CD4-positive, alpha-beta T cell (primary cell): ENCODE measurements at regions of chr16 and their contacts with region 1.

Region 1: DNA sequence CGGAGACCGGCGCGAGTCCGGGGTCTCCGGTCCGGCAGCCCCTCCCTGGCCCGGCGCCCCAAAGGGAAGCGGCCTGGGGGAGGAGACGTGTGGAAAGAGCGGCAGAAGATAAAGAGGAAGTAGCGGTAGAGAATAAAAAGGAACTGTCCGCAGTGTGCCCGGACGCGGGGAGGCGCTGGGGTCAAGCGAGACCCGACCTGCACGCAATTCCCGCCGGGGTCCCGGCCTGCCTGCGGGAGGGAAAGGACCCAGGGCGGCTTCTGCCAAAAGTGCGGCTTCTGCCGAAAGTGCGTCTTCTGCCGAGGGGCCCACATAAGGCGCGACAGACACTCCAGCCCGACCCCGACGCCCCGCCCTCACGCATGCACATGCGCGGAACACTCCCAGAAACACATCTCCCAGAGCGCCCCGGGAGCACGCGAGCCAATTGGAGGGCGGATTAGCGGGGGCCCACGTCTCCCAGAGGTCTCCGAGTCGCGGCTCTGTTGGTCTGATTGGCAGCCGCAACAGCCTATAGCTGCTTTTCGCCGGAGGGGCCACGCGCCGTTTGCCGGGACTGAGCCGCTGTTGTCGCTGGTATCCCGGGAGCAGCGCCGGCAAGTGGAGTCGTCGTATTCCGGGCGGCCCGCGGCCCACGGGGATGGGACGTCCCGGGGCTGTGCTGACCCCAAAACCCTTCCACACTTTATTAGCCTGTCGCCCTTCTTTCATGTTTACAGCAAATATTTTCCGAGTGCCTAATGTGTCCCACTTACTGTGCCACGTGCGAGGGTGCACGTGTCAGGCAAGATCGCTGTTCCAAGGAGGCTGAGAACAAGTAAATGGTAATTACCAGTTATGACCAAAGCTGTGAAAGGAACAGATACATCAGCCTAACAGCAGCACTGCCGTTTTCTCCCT is 8.0 kb upstream of the MEFV start:
- DNase-seq: peak; percentile 92 to 98 (median 96)
- ATAC-seq: peak; percentile 85
- H3K4me3 ChIP-seq: peak overlapping the region; percentile 91
- H3K4me3 Mint-ChIP-seq: peak overlapping the region; percentile 92
- H3K27ac ChIP-seq: peak overlapping the region; percentile 95 to 96
- H3K27ac Mint-ChIP-seq: peak overlapping the region; percentile 96
- H3K4me1 ChIP-seq: peaks cover 47% of the 10 kb centered on the region
- H3K4me1 Mint-ChIP-seq: peaks cover 31% of the 10 kb centered on the region
- H3K27me3 ChIP-seq: no peaks in the 10 kb centered on the region
- H3K27me3 Mint-ChIP-seq: no peaks in the 10 kb centered on the region
- CTCF ChIP-seq: no peak

Region 2: GRCh38 chr16:3074860-3075522 is 189.4 kb before region 1 on chr16:
- CTCF ChIA-PET with region 1: no interaction called
- POLR2A ChIA-PET with region 1: no interaction called
- intact Hi-C with region 1: no loop called
- DNase-seq: peak; percentile 58 to 95 (median 82)
- ATAC-seq: peak; percentile 89
- H3K4me3 ChIP-seq: peak overlapping the region; percentile 34
- H3K4me3 Mint-ChIP-seq: peak overlapping the region; percentile 77
- H3K27ac ChIP-seq: peak overlapping the region; percentile 80 to 86
- H3K27ac Mint-ChIP-seq: peak overlapping the region; percentile 95
- H3K4me1 ChIP-seq: peaks cover 96% of the 10 kb centered on the region
- H3K4me1 Mint-ChIP-seq: peaks cover 93% of the 10 kb centered on the region
- H3K27me3 ChIP-seq: no peaks in the 10 kb centered on the region
- H3K27me3 Mint-ChIP-seq: no peaks in the 10 kb centered on the region
- CTCF ChIP-seq: no peak

Region 3: DNA sequence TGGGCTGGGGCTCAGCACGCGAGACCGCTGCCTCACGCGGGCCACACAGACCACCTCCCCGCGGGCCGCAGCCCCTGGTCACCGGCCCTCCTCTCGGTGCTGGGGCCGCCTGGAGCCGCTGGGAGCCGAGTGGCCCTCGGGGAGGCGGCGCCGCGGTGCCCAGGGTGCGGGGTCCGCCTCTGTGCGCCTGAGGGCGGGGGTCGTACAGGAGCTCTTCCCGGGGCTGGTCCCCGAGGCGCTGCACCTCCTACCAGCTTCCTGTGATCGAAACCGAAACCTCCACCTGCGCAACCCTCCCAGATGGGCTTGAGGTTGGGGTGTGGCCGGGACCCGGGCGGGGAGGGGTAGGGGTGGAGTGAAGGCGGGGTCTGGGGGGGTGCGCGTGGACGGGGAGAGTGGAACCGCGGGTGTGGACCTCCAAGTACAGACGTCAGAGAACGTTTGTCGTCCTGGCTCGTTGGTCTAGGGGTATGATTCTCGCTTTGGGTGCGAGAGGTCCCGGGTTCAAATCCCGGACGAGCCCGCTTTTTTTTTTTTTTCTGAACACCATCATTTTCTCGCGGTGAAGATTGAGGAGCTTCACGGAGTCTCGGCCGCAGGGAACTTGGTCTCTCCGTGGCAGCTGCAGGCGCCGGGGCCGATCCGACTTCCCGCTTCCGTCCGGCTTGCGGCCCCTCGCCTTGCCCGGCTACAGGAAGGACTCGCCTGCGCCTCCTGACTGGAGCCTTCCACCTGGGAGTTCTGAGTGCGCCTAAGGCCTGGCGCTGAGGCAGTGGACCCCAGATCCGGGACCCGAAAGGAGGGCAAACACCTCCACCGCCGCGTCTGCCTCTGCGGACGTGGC is 105.7 kb before region 1 on chr16:
- CTCF ChIA-PET with region 1: no interaction called
- POLR2A ChIA-PET with region 1: interaction called, 20 read pairs
- intact Hi-C with region 1: loop called in 1 of 2 experiments (anchors 5 kb)
- DNase-seq: peak; percentile 92 to 98 (median 94)
- ATAC-seq: peak; percentile 89
- H3K4me3 ChIP-seq: peak overlapping the region; percentile 85
- H3K4me3 Mint-ChIP-seq: peak overlapping the region; percentile 97
- H3K27ac ChIP-seq: peak overlapping the region; percentile 39 to 55
- H3K27ac Mint-ChIP-seq: peak overlapping the region; percentile 97
- H3K4me1 ChIP-seq: peaks cover 28% of the 10 kb centered on the region
- H3K4me1 Mint-ChIP-seq: peaks cover 18% of the 10 kb centered on the region
- H3K27me3 ChIP-seq: no peaks in the 10 kb centered on the region
- H3K27me3 Mint-ChIP-seq: peaks cover 7% of the 10 kb centered on the region
- CTCF ChIP-seq: no peak

Region 4: DNA sequence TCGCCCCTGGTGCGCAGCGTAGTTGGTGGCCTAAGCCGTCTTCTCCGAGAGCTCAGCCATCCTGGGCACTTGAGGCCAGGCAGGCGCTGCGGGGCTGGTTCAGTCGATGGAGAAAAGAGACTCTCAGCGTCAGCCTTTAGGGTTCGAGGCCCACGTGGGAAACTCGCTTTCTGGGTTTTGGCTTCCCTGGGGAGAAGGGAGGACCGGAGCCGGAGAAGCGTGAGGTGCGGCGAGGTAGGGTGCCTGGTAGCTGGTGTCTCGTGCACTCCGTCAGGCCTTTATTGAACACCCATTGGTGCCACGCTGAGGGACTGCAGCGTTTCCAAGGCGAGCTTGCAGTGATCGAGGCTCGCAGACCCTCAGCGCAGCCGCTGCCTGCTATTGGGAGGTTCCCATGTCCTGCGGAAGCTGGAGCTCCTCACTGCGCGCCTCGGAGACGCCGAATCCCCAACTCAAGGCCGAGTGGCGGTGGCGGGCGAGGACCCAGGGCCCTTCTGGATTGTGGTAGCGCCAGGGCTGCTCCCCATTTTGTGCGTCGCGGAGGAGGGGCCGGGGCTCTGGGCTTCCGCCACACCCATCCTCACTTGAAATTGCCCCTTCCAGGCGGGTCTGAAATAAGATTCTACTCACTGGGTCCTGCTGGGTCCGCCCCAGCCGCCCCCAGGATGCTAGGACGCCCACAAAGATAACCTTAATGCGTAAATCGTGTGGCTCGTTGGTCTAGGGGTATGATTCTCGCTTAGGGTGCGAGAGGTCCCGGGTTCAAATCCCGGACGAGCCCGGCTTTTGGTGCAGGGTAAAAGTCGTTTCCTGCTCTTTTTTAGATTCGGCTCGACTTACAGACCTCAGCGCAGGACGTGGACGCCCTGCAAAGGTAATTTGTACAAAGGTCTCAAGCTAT is 75.2 kb before region 1 on chr16:
- CTCF ChIA-PET with region 1: no interaction called
- POLR2A ChIA-PET with region 1: interaction called, 13 read pairs
- intact Hi-C with region 1: loop called (anchors 5 to 10 kb)
- DNase-seq: peak in 6 of 14 experiments; percentile 7 to 59 (median 44)
- ATAC-seq: peak; percentile 44
- H3K4me3 ChIP-seq: peak overlapping the region; percentile 33
- H3K4me3 Mint-ChIP-seq: peak overlapping the region; percentile 81
- H3K27ac ChIP-seq: no peak overlapping the region
- H3K27ac Mint-ChIP-seq: peak overlapping the region; percentile 47
- H3K4me1 ChIP-seq: peaks cover 51% of the 10 kb centered on the region
- H3K4me1 Mint-ChIP-seq: peaks cover 44% of the 10 kb centered on the region
- H3K27me3 ChIP-seq: peaks cover 68 to 78% of the 10 kb centered on the region in 2 experiments
- H3K27me3 Mint-ChIP-seq: peaks cover 88% of the 10 kb centered on the region
- CTCF ChIP-seq: no peak

Region 5: DNA sequence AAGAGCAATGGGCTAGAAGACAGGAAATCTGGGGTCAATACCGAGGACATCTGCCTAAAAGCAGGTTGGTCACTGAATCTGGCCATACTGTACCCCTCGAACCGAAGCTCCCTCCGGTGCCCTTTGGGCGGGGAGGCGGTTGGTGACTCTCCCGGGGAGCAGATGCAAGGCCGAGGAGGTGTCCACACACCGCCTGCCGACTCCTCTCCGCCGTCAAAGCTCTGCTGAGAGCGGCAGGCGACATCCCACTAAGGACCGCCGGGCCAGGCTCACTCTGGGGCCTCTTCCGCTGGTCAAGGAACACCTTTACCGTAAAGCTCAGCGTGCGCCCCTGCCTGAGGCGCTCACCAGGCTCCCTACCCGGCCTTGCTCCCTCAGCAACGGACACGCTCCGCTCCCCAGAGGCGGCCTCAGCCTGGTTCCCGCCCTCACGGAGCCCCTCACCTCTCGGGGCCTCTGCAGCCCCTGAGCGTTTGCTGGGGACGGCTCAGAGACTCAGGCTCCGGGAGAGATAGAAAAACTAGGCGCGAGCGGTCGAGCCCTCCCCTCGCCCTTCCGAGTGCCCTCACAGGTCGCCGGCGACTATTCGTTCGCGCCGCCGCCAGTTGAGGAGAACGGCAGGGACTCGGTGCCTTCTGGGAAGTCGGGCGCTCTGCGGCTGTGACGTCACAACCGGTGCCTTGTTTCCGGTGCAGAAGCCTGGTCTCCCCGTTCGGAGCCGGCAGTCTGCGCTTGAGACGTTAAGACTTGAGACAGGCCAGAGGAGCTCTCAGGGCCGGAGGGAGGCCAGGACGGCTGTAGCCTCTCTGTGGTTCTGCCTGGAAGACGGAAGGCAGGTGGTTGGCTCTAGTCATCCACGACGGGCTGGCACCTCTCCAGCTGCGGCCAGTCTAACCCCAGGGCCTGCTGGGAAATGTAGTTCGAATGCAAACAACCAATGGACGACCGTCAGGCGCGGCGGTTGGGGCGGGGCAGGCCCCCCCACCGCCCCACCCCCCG is 29.5 kb before region 1 on chr16 and contains the start of gene ZNF200:
- CTCF ChIA-PET with region 1: no interaction called
- POLR2A ChIA-PET with region 1: interaction called, 13 read pairs
- intact Hi-C with region 1: loop called (anchors 1 to 2 kb)
- DNase-seq: peak; percentile 86 to 97 (median 90)
- ATAC-seq: peak; percentile 89
- H3K4me3 ChIP-seq: peak within 1 kb of the TSS; percentile 98
- H3K4me3 Mint-ChIP-seq: peak within 1 kb of the TSS; percentile 94
- H3K27ac ChIP-seq: peak within 1 kb of the TSS; percentile 88 to 97
- H3K27ac Mint-ChIP-seq: peak within 1 kb of the TSS; percentile 94
- H3K4me1 ChIP-seq: peaks cover 27% of the 10 kb centered on the region
- H3K4me1 Mint-ChIP-seq: peaks cover 50% of the 10 kb centered on the region
- H3K27me3 ChIP-seq: no peaks in the 10 kb centered on the region
- H3K27me3 Mint-ChIP-seq: no peaks in the 10 kb centered on the region
- CTCF ChIP-seq: no peak
- total RNA-seq, gene ZNF200: 7.0 to 7.2 TPM

Region 6: DNA sequence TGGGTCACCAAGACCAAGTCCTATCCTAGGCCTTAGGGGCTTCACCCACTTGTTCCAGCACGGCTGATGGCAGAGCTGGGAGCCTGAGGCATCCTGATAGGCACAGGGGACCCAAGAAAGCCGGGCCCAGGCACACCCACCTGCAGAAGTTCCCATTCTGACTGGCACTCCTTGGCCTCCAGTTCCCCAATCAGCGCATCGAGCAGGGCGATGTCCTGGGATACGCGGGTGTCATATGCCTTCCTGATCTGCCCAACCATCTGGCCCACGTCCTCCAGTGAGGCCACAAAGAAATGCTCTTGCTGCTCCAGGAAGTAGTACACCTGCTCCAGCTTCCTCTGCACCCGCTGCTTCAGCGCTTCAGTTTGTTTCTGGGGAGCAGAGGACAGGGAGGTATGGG is 17.5 kb before region 1 on chr16:
- CTCF ChIA-PET with region 1: no interaction called
- POLR2A ChIA-PET with region 1: no interaction called
- intact Hi-C with region 1: no loop called
- DNase-seq: no peak
- ATAC-seq: no peak
- H3K4me3 ChIP-seq: no peak overlapping the region
- H3K4me3 Mint-ChIP-seq: no peak overlapping the region
- H3K27ac ChIP-seq: no peak overlapping the region
- H3K27ac Mint-ChIP-seq: no peak overlapping the region
- H3K4me1 ChIP-seq: peaks cover 7% of the 10 kb centered on the region
- H3K4me1 Mint-ChIP-seq: no peaks in the 10 kb centered on the region
- H3K27me3 ChIP-seq: no peaks in the 10 kb centered on the region
- H3K27me3 Mint-ChIP-seq: peaks cover 7% of the 10 kb centered on the region
- CTCF ChIP-seq: no peak

Region 7: DNA sequence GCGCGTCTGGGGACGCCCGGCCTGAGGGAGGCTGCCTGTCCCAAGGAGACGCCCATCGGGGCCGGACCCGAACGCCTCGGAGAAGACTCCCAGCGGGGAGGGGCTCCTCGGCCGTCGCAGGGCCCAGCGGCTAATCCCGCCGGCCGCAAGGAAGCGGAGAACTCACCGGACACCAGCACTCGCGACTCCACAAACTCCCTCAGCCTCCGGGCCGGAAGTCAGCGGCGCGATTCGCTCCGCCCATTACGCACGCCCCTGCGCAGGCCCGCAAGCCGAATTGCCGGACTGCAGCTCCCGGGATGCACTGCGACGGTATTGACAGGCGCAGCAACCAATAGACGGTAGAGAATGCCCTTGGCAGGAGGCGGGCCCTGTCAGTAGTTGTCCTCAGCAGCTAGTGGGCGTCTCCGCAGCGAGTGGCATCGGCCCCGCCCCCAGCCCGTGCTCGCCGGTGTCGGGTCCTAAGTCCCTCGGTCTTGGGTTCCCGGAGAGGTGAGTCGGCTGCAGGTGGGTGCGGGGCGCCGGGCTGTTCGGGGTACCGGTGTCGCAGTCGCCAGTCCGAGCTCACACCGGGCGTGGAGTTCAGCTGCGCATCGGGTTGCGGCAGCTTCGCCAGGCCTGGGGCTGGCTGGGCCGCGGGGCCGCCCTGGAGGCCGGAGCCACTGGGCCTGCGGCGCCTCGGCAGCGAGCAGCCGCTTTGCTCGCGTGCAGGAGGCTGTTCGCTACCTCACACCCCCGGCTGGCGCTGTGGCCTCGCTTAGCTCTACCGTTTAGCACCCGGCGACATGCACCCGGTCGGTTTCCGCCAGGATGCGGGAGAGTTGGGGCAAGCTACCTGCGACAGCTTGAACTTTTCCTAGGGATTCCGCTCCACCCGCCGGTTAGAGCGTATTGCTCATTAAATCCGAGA is 136.6 kb after region 1 on chr16 and contains the starts of genes ZNF174 and ZSCAN32:
- CTCF ChIA-PET with region 1: no interaction called
- POLR2A ChIA-PET with region 1: interaction called, 32 read pairs
- intact Hi-C with region 1: loop called (anchors 2 to 5 kb)
- DNase-seq: peak; percentile 96 to 99 (median 98)
- ATAC-seq: peak; percentile 97
- H3K4me3 ChIP-seq: peak within 1 kb of the TSS; percentile 83
- H3K4me3 Mint-ChIP-seq: peak within 1 kb of the TSS; percentile 95
- H3K27ac ChIP-seq: peak within 1 kb of the TSS; percentile 71 to 73
- H3K27ac Mint-ChIP-seq: peak within 1 kb of the TSS; percentile 88
- H3K4me1 ChIP-seq: peaks cover 49% of the 10 kb centered on the region
- H3K4me1 Mint-ChIP-seq: peaks cover 67% of the 10 kb centered on the region
- H3K27me3 ChIP-seq: no peaks in the 10 kb centered on the region
- H3K27me3 Mint-ChIP-seq: no peaks in the 10 kb centered on the region
- CTCF ChIP-seq: no peak
- total RNA-seq, gene ZNF174: 5.6 to 5.7 TPM
- total RNA-seq, gene ZSCAN32: 4.8 to 5.4 TPM

Region 8: DNA sequence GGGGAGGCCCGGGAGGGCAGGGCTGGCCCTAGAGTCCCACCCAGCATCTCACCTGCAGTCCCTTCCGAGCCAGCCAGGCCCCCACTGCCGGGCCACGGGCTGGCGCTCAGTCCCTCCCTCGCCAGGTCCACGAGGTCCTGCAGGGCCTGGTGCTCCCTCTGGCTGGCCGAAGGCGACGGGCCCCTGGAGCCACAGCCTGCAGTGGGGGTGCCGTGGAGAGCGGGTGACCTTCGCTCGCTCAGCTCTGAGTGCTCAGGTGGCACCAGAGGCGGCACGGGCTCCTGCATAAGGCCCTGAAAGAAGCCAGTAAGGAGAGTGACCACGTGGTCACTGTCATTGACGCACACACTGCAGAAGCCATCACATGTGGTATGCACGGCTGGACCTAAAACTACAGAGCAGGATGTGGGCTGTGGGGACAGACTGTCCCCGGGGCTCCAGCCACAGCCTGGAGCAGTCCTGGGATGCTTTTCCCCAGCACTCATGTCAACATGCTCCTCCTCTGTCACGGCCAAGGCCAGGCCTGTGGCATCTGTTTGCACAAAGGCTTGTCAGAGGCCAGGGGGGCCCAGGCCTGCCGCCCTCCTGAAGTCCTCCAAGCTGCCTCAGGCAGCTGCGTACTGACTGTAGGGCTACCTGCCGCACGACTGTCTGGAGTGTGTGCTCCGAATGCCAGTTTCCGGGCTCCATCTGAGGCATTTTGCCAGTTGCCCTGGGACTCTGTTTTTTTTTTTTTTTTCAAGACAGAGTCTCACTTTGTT is 331.9 kb after region 1 on chr16:
- CTCF ChIA-PET with region 1: no interaction called
- POLR2A ChIA-PET with region 1: no interaction called
- intact Hi-C with region 1: no loop called
- DNase-seq: no peak
- ATAC-seq: no peak
- H3K4me3 ChIP-seq: no peak overlapping the region
- H3K4me3 Mint-ChIP-seq: no peak overlapping the region
- H3K27ac ChIP-seq: no peak overlapping the region
- H3K27ac Mint-ChIP-seq: no peak overlapping the region
- H3K4me1 ChIP-seq: no peaks in the 10 kb centered on the region
- H3K4me1 Mint-ChIP-seq: no peaks in the 10 kb centered on the region
- H3K27me3 ChIP-seq: no peaks in the 10 kb centered on the region
- H3K27me3 Mint-ChIP-seq: no peaks in the 10 kb centered on the region
- CTCF ChIP-seq: no peak